Spleen (tissue), 13 donors: ENCODE measurements at regions of chr16 and their contacts with region 1.

Region 1: GRCh38 chr16:23974223-23974622 is 138.4 kb downstream of the PRKCB start:
- DNase-seq: no peak
- H3K4me3 ChIP-seq: no peak overlapping the region
- H3K27ac ChIP-seq: no peak overlapping the region
- H3K4me1 ChIP-seq: peaks cover 7 to 78% (median 19%) of the 10 kb centered on the region in 6 donors
- H3K27me3 ChIP-seq: no peaks in the 10 kb centered on the region
- CTCF ChIP-seq: no peak
- POLR2A ChIP-seq: no peak

Region 2: GRCh38 chr16:23924128-23924527 is 50.1 kb before region 1 on chr16:
- intact Hi-C with region 1: loop called (anchors 10 kb)
- DNase-seq: no peak
- H3K4me3 ChIP-seq: no peak overlapping the region
- H3K27ac ChIP-seq: peak overlapping the region in 3 of 8 donors; percentile 19 to 39 (median 37)
- H3K4me1 ChIP-seq: peaks cover 0 to 65% (median 13%) of the 10 kb centered on the region in 6 donors
- H3K27me3 ChIP-seq: no peaks in the 10 kb centered on the region
- CTCF ChIP-seq: no peak
- POLR2A ChIP-seq: no peak